Heart right ventricle (tissue), 16 donors: ENCODE measurements at regions of chr17 and their contacts with region 1.

Region 1: GRCh38 chr17:2592971-2593820 is at the start of gene PAFAH1B1:
- DNase-seq: peak; percentile 93 to 94
- ATAC-seq: peak; percentile 91 to 97 (median 95)
- H3K4me3 ChIP-seq: peak within 1 kb of the TSS; percentile 65 to 99 (median 98)
- H3K27ac ChIP-seq: peak within 1 kb of the TSS; percentile 84 to 100 (median 99)
- H3K4me1 ChIP-seq: peaks cover 3 to 46% (median 41%) of the 10 kb centered on the region in 9 donors
- H3K27me3 ChIP-seq: no peaks in the 10 kb centered on the region
- CTCF ChIP-seq: peak in 5 of 9 donors; percentile 19 to 54 (median 38)
- total RNA-seq, gene PAFAH1B1: 113 to 155 (median 132) TPM

Region 2: DNA sequence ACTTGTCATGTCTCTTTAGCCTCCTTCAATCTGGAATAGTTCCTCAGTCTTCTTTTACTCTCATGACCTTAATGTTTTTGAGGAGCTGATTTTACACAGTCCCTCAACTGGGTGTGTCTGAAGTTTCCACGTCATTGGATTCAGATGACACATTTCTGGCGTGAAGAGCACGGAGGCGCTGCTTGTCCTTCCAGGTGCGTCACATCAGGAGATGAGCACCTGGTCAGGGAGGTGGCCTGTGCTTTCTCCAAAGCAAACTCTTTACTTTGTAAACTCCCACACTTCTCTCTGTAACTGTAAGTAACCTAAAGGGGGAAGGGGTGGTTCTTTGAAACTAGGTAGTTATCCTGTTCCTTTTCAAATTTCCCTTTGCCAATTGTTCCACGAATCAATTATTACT is 139.9 kb before region 1 on chr17:
- intact Hi-C with region 1: no loop called
- DNase-seq: no peak
- ATAC-seq: no peak
- H3K4me3 ChIP-seq: no peak overlapping the region
- H3K27ac ChIP-seq: no peak overlapping the region
- H3K4me1 ChIP-seq: peaks cover 0 to 23% (median 0%) of the 10 kb centered on the region in 9 donors
- H3K27me3 ChIP-seq: no peaks in the 10 kb centered on the region
- CTCF ChIP-seq: no peak

Region 3: DNA sequence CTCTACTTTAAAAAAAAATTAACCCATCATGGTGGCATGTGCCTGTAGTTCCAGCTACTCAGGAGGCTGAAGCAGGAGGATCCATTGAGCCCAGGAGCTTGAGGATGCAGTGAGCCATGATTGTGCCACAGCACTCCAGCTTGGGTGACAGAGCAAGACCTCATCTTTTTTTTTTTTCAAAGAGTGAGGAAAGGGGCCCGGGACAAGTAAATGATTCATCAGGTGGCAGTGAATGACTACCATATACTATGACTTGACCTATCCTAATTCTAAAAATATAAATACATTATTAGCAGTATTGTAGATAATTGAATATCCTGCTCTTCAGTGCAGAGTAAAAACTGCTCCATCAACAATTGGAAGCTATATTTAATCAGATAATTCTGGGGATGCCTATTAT is 63.1 kb after region 1 on chr17:
- intact Hi-C with region 1: loop called in 1 of 10 experiments (anchors 10 kb)
- DNase-seq: no peak
- ATAC-seq: no peak
- H3K4me3 ChIP-seq: no peak overlapping the region
- H3K27ac ChIP-seq: peak overlapping the region in 1 of 10 donors; percentile 21
- H3K4me1 ChIP-seq: peaks cover 0 to 47% (median 12%) of the 10 kb centered on the region in 9 donors
- H3K27me3 ChIP-seq: no peaks in the 10 kb centered on the region
- CTCF ChIP-seq: no peak

Region 4: GRCh38 chr17:2672026-2672425 is 78.8 kb after region 1 on chr17:
- intact Hi-C with region 1: loop called in 7 of 10 experiments (anchors 5 to 10 kb)
- DNase-seq: no peak
- ATAC-seq: no peak
- H3K4me3 ChIP-seq: no peak overlapping the region
- H3K27ac ChIP-seq: no peak overlapping the region
- H3K4me1 ChIP-seq: no peaks in the 10 kb centered on the region
- H3K27me3 ChIP-seq: no peaks in the 10 kb centered on the region
- CTCF ChIP-seq: no peak

Region 5: GRCh38 chr17:2688351-2689342 is 95.5 kb after region 1 on chr17:
- intact Hi-C with region 1: loop called in 1 of 10 experiments (anchors 10 kb)
- DNase-seq: peak; percentile 6 to 21
- ATAC-seq: peak in 6 of 8 donors; percentile 1 to 55 (median 20)
- H3K4me3 ChIP-seq: no peak overlapping the region
- H3K27ac ChIP-seq: peak overlapping the region in 4 of 10 donors; percentile 12 to 67 (median 28)
- H3K4me1 ChIP-seq: peaks cover 7 to 54% (median 33%) of the 10 kb centered on the region in 9 donors
- H3K27me3 ChIP-seq: no peaks in the 10 kb centered on the region
- CTCF ChIP-seq: no peak